H1 (cell line): ENCODE measurements at regions of chr19 and their contacts with region 1.

Region 1: GRCh38 chr19:1747285-1748114 is 5.8 kb upstream of the ONECUT3 start:
- DNase-seq: peak in 1 of 2 experiments; percentile 54
- H3K4me3 ChIP-seq: peak overlapping the region in 3 of 4 experiments; percentile 22 to 59 (median 34); a peak in 3 of 8 replicates
- H3K27ac ChIP-seq: no peak overlapping the region
- H3K4me1 ChIP-seq: peaks cover 0 to 46% (median 27%) of the 10 kb centered on the region in 4 experiments; a peak in 6 of 7 replicates
- H3K27me3 ChIP-seq: peaks cover 67 to 86% (median 78%) of the 10 kb centered on the region in 4 experiments
- CTCF ChIP-seq: no peak
- EP300 ChIP-seq: no peak
- POLR2A ChIP-seq: no peak
- RAD21 ChIP-seq: no peak

Region 2: GRCh38 chr19:1618157-1619093 is 129.1 kb before region 1 on chr19:
- CTCF ChIA-PET with region 1: no interaction called
- POLR2A ChIA-PET with region 1: no interaction called
- DNase-seq: peak; percentile 54 to 73
- H3K4me3 ChIP-seq: no peak overlapping the region
- H3K27ac ChIP-seq: no peak overlapping the region
- H3K4me1 ChIP-seq: peaks cover 0 to 8% (median 4%) of the 10 kb centered on the region in 4 experiments; a peak in 3 of 7 replicates
- H3K27me3 ChIP-seq: no peaks in the 10 kb centered on the region
- CTCF ChIP-seq: peak; percentile 64 to 77 (median 75)
- EP300 ChIP-seq: no peak
- POLR2A ChIP-seq: no peak
- RAD21 ChIP-seq: peak; percentile 32 to 48; a peak in 3 of 4 replicates

Region 3: GRCh38 chr19:1760020-1760419 is 12.5 kb after region 1 on chr19:
- CTCF ChIA-PET with region 1: interaction called, 10 read pairs
- POLR2A ChIA-PET with region 1: interaction called, 21 read pairs
- DNase-seq: peak in 1 of 2 experiments; percentile 62
- H3K4me3 ChIP-seq: no peak overlapping the region
- H3K27ac ChIP-seq: no peak overlapping the region
- H3K4me1 ChIP-seq: peaks cover 0 to 25% (median 13%) of the 10 kb centered on the region in 4 experiments; a peak in 6 of 7 replicates
- H3K27me3 ChIP-seq: peaks cover 98 to 100% (median 100%) of the 10 kb centered on the region in 4 experiments
- CTCF ChIP-seq: no peak
- EP300 ChIP-seq: no peak
- POLR2A ChIP-seq: no peak
- RAD21 ChIP-seq: no peak

Region 4: DNA sequence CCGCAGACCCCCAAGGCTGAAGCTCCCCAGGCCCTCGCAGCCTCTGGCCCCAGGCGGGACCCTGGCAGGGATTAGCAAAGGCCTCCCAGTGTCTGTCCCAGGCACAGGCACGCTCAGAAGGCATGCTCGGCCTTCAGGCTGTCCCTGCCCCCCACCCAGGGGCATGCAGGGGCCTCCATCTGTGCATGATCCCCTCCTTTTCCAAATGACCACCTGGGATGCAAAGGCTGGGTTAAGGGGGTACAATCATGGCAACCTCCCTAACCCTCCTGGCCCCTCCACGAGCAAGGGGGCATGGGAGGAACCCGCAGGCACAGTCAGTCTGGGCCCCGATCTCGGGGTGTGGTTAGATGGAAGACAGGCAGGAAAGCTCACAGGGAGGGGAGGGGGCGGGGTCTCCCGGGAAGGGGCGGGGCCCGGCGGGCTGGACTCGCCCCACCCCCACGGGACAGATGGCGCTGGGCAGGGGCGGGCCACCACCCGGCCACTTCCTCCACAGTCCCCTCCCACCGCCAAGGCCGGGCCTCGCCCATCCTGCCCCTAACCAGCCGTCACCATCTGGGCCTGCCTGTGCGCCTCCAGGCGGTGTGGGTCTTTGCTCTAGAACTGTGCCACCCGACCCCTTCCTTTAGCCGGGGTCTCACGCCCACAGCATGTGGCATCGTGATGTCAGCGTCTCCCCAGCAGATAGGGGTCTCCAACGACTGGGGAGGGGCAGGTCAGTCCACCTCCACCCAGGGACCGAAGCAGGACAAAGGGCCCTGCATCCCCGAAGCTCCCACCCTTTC is 107.7 kb after region 1 on chr19:
- CTCF ChIA-PET with region 1: no interaction called
- POLR2A ChIA-PET with region 1: no interaction called
- DNase-seq: peak; percentile 71 to 89
- H3K4me3 ChIP-seq: peak overlapping the region in 2 of 4 experiments; percentile 7 to 70; a peak in 2 of 8 replicates
- H3K27ac ChIP-seq: peak overlapping the region; percentile 58
- H3K4me1 ChIP-seq: peaks cover 0 to 61% (median 51%) of the 10 kb centered on the region in 4 experiments; a peak in 6 of 7 replicates
- H3K27me3 ChIP-seq: no peaks in the 10 kb centered on the region
- CTCF ChIP-seq: no peak
- EP300 ChIP-seq: no peak
- POLR2A ChIP-seq: 0 out of 3 replicates have a peak, but pooled peaks of 1 of the 2 experiments have one; percentile 34
- RAD21 ChIP-seq: no peak